Activated naive CD4-positive, alpha-beta T cell treated with anti-CD3 and anti-CD28 coated beads, Interleukin-2, amount 10 ng/mL, durations not matched to agents 7 days and 5 days (primary cell): ENCODE measurements at regions of chr11 and their contacts with region 1.

Region 1: DNA sequence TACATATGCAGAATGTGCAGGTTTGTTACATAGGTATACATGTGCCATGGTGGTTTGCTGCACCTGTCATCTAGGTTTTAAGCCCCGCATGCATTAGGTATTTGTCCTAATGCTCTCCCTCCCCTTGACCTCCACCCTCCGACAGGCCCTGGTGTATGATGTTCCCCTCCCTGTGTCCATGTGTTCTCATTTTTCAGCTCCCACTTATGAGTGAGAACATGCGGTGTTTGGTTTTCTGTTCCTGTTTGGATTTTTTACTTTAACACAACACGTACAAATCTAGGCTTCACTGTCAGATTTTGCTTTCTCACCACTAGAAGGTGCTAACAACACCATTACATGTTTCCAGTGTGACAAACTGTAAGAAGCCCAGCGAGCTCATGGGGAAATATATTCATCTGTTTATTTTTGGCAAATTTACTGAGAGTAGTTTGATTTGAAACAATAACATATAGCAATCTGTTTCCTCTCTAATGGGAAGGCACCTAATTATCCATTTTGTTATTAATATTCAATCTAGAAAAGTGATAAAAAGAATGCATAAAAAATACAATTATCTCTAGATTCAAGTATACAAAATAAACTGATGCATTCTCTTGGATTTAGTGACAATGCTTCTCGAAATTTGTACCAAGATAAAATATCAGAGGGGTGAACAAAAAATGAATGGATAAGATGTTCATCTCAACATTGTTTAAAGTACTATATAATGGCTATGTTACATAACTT is 23.2 kb upstream of the BIRC3 start:
- DNase-seq: no peak
- H3K4me3 Mint-ChIP-seq: peak overlapping the region; percentile 58
- H3K27ac Mint-ChIP-seq: peak overlapping the region; percentile 16
- H3K4me1 Mint-ChIP-seq: peaks cover 33% of the 10 kb centered on the region
- H3K27me3 Mint-ChIP-seq: no peaks in the 10 kb centered on the region

Region 2: GRCh38 chr11:102306048-102306585 is 12.1 kb after region 1 on chr11:
- CTCF ChIA-PET with region 1: interaction called, 34 read pairs
- DNase-seq: no peak
- H3K4me3 Mint-ChIP-seq: peak overlapping the region; percentile 31
- H3K27ac Mint-ChIP-seq: peak overlapping the region; percentile 84
- H3K4me1 Mint-ChIP-seq: peaks cover 52% of the 10 kb centered on the region
- H3K27me3 Mint-ChIP-seq: no peaks in the 10 kb centered on the region

Region 3: GRCh38 chr11:102317099-102317767 is 23.2 kb after region 1 on chr11 and contains the start of gene BIRC3:
- CTCF ChIA-PET with region 1: interaction called, 47 read pairs
- DNase-seq: peak; percentile 94
- H3K4me3 Mint-ChIP-seq: peak within 1 kb of the TSS; percentile 87
- H3K27ac Mint-ChIP-seq: peak within 1 kb of the TSS; percentile 97
- H3K4me1 Mint-ChIP-seq: peaks cover 78% of the 10 kb centered on the region
- H3K27me3 Mint-ChIP-seq: no peaks in the 10 kb centered on the region

Region 4: DNA sequence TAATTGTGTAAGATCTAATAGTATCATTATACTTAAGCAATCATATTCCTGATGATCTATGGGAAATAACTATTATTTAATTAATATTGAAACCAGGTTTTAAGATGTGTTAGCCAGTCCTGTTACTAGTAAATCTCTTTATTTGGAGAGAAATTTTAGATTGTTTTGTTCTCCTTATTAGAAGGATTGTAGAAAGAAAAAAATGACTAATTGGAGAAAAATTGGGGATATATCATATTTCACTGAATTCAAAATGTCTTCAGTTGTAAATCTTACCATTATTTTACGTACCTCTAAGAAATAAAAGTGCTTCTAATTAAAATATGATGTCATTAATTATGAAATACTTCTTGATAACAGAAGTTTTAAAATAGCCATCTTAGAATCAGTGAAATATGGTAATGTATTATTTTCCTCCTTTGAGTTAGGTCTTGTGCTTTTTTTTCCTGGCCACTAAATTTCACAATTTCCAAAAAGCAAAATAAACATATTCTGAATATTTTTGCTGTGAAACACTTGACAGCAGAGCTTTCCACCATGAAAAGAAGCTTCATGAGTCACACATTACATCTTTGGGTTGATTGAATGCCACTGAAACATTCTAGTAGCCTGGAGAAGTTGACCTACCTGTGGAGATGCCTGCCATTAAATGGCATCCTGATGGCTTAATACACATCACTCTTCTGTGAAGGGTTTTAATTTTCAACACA is 29.7 kb after region 1 on chr11:
- CTCF ChIA-PET with region 1: interaction called, 47 read pairs
- DNase-seq: no peak
- H3K4me3 Mint-ChIP-seq: no peak overlapping the region
- H3K27ac Mint-ChIP-seq: no peak overlapping the region
- H3K4me1 Mint-ChIP-seq: peaks cover 50% of the 10 kb centered on the region
- H3K27me3 Mint-ChIP-seq: no peaks in the 10 kb centered on the region

Region 5: DNA sequence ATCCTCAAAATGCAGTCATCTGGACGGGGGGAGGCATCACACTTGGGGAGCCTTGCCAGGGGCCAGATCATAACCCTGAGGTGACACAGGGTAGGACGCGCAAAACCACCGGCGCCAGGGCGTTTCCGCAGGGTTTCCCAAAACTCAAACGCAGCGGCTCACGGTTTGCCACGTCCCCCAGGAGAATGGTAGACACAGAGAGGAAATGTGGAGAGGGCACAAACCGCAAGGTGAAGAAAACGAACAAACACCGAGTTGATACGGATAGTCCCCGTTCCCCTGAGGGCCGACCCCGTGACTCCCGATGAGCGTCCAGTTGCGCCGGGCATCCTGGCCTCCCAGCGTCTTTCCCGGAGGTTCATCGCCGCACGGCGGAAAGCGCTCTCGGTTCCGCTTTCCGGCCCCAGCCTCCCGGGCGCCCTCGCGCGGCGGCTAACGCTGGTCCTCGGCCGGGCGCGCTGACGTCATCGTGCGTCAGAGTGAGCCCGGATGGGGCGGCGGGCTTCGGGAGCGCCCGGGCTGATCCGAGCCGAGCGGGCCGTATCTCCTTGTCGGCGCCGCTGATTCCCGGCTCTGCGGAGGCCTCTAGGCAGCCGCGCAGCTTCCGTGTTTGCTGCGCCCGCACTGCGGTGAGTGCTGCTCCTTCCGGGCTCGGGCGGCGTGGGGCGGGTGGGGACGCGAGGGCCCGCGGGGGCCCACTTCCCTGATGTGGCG is 52.9 kb after region 1 on chr11 and contains the start of gene BIRC2:
- CTCF ChIA-PET with region 1: interaction called, 136 read pairs
- DNase-seq: peak; percentile 95
- H3K4me3 Mint-ChIP-seq: peak within 1 kb of the TSS; percentile 98
- H3K27ac Mint-ChIP-seq: peak within 1 kb of the TSS; percentile 96
- H3K4me1 Mint-ChIP-seq: peaks cover 43% of the 10 kb centered on the region
- H3K27me3 Mint-ChIP-seq: no peaks in the 10 kb centered on the region